ENCODE measurements at regions of chr16 and their contacts with region 1.

Region 1: GRCh38 chr16:29710227-29711219 is 31.5 kb downstream of the QPRT start:
- DNase-seq: no peak
- ATAC-seq: peak; percentile 97
- H3K4me3 Mint-ChIP-seq: no peak overlapping the region
- H3K27ac Mint-ChIP-seq: no peak overlapping the region
- H3K4me1 Mint-ChIP-seq: peaks cover 26% of the 10 kb centered on the region
- H3K27me3 Mint-ChIP-seq: no peaks in the 10 kb centered on the region
- CTCF ChIP-seq: peak; percentile 30

Region 2: GRCh38 chr16:28859326-28859725 is 851.2 kb before region 1 on chr16:
- CTCF ChIA-PET with region 1: no interaction called
- POLR2A ChIA-PET with region 1: no interaction called
- intact Hi-C with region 1: no loop called
- DNase-seq: no peak
- ATAC-seq: no peak
- H3K4me3 Mint-ChIP-seq: no peak overlapping the region
- H3K27ac Mint-ChIP-seq: no peak overlapping the region
- H3K4me1 Mint-ChIP-seq: peaks cover 8% of the 10 kb centered on the region
- H3K27me3 Mint-ChIP-seq: no peaks in the 10 kb centered on the region
- CTCF ChIP-seq: no peak

Region 3: GRCh38 chr16:29729116-29729521 is 18.6 kb after region 1 on chr16:
- CTCF ChIA-PET with region 1: no interaction called
- POLR2A ChIA-PET with region 1: interaction called, 9 read pairs
- intact Hi-C with region 1: loop called (anchors 2 kb)
- DNase-seq: no peak
- ATAC-seq: no peak
- H3K4me3 Mint-ChIP-seq: no peak overlapping the region
- H3K27ac Mint-ChIP-seq: no peak overlapping the region
- H3K4me1 Mint-ChIP-seq: peaks cover 27% of the 10 kb centered on the region
- H3K27me3 Mint-ChIP-seq: no peaks in the 10 kb centered on the region
- CTCF ChIP-seq: no peak

Measured in activated B cell treated with CpG ODN at 0.5 μM for 24 hours (primary cell).